Activated CD8-positive, alpha-beta T cell treated with anti-CD3 and anti-CD28 coated beads for 36 hours (primary cell): ENCODE measurements at regions of chr3 and their contacts with region 1.

Region 1: DNA sequence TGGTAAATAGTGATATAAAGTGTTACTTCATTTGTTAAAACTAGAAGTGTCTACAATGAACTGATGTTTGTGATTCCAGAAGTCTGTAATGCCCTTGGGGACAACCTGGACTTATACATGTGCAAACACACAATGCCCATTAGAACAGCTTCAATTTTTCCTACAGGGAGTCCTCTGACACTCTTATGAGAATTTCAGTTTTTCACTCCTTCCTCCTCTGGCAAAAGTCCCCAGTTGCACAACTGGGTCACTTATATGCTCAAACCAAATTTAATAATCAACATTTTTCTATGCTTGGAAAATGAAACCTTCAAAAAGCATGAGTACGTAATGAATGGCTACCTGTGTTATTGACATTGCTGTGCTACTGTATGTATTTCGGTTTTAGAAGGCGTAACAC is at the start of gene OR5H15:
- DNase-seq: no peak
- ATAC-seq: no peak
- H3K4me3 Mint-ChIP-seq: no peak within 1 kb of the TSS
- H3K27ac Mint-ChIP-seq: no peak within 1 kb of the TSS
- H3K4me1 Mint-ChIP-seq: no peaks in the 10 kb centered on the region
- H3K27me3 Mint-ChIP-seq: peaks cover 3% of the 10 kb centered on the region
- CTCF ChIP-seq: no peak
- total RNA-seq, gene OR5H15: not detected

Region 2: GRCh38 chr3:98021830-98022590 is 144.4 kb before region 1 on chr3:
- CTCF ChIA-PET with region 1: no interaction called
- POLR2A ChIA-PET with region 1: no interaction called
- intact Hi-C with region 1: no loop called
- DNase-seq: no peak
- ATAC-seq: no peak
- H3K4me3 Mint-ChIP-seq: no peak overlapping the region
- H3K27ac Mint-ChIP-seq: no peak overlapping the region
- H3K4me1 Mint-ChIP-seq: peaks cover 1% of the 10 kb centered on the region
- H3K27me3 Mint-ChIP-seq: peaks cover 3% of the 10 kb centered on the region
- CTCF ChIP-seq: no peak

Region 3: GRCh38 chr3:98058244-98058960 is 108.0 kb before region 1 on chr3:
- CTCF ChIA-PET with region 1: no interaction called
- POLR2A ChIA-PET with region 1: no interaction called
- intact Hi-C with region 1: no loop called
- DNase-seq: no peak
- ATAC-seq: no peak
- H3K4me3 Mint-ChIP-seq: no peak overlapping the region
- H3K27ac Mint-ChIP-seq: no peak overlapping the region
- H3K4me1 Mint-ChIP-seq: no peaks in the 10 kb centered on the region
- H3K27me3 Mint-ChIP-seq: peaks cover 8% of the 10 kb centered on the region
- CTCF ChIP-seq: no peak

Region 4: GRCh38 chr3:98199020-98199419 is 32.6 kb after region 1 on chr3:
- CTCF ChIA-PET with region 1: no interaction called
- POLR2A ChIA-PET with region 1: no interaction called
- intact Hi-C with region 1: loop called (anchors 1 kb)
- DNase-seq: no peak
- ATAC-seq: no peak
- H3K4me3 Mint-ChIP-seq: no peak overlapping the region
- H3K27ac Mint-ChIP-seq: no peak overlapping the region
- H3K4me1 Mint-ChIP-seq: no peaks in the 10 kb centered on the region
- H3K27me3 Mint-ChIP-seq: no peaks in the 10 kb centered on the region
- CTCF ChIP-seq: no peak